PC-3 (cell line): ENCODE measurements at regions of chr11 and their contacts with region 1.

Region 1: DNA sequence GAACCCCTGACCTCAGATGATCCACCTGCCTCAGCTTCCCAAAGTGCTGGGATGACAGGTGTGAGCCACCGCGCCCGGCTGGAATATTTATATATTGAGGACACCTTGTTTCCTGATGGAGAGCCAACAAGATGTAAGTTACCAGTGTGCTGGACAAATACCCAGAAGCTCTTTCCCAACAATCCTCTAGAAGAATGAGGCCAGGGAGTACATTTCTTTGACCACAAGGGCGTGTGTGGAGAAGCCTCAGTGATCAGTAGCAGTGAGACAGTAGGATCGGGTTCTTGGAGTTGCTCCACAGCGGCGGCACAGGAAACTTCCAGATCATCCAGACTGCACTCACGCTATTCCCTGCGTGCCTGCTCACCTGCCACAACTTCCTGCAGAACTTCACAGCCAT is 10.3 kb upstream of the POLA2 start:
- DNase-seq: peak; percentile 19
- ATAC-seq: no peak
- H3K4me3 ChIP-seq: no peak overlapping the region
- H3K27ac ChIP-seq: no peak overlapping the region
- H3K4me1 ChIP-seq: no peaks in the 10 kb centered on the region; the same call in 1 of the 2 replicates
- H3K27me3 ChIP-seq: no peaks in the 10 kb centered on the region
- CTCF ChIP-seq: no peak

Region 2: DNA sequence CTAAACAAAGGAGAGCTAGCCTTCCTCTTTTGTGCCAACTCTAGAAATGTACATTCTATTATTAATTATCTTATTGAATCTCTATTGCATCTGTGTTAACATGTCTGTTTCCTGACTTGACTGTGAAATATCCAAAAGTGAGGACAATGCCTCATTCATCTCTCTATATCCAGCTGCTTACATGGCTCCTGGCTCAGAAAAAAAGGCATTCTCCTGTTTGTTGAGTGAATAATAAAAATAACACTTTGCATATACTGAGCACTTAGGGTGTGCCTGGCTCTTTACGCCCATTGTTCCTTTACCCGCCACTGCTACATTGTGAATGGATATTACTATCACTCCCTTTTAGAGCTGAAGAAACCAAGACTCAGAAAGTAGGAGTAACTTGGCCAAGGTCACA is 548.4 kb before region 1 on chr11:
- CTCF ChIA-PET with region 1: no interaction called
- POLR2A ChIA-PET with region 1: no interaction called
- intact Hi-C with region 1: no loop called
- DNase-seq: no peak
- ATAC-seq: no peak
- H3K4me3 ChIP-seq: no peak overlapping the region
- H3K27ac ChIP-seq: no peak overlapping the region
- H3K4me1 ChIP-seq: no peaks in the 10 kb centered on the region
- H3K27me3 ChIP-seq: peaks cover 37% of the 10 kb centered on the region
- CTCF ChIP-seq: no peak

Region 3: GRCh38 chr11:65204646-65205601 is 46.6 kb before region 1 on chr11:
- CTCF ChIA-PET with region 1: no interaction called
- POLR2A ChIA-PET with region 1: interaction called, 4 read pairs
- intact Hi-C with region 1: loop called (anchors 1 kb)
- DNase-seq: peak; percentile 59
- ATAC-seq: peak; percentile 69
- H3K4me3 ChIP-seq: no peak overlapping the region
- H3K27ac ChIP-seq: no peak overlapping the region
- H3K4me1 ChIP-seq: no peaks in the 10 kb centered on the region
- H3K27me3 ChIP-seq: no peaks in the 10 kb centered on the region
- CTCF ChIP-seq: peak; percentile 98